ENCODE measurements at regions of chr6 and their contacts with region 1.

Region 1: GRCh38 chr6:88982720-88983119 is 19.3 kb upstream of the RNGTT start:
- H3K4me3 ChIP-seq: no peak overlapping the region
- H3K27ac ChIP-seq: no peak overlapping the region
- H3K4me1 ChIP-seq: no peaks in the 10 kb centered on the region
- CTCF ChIP-seq: peak; percentile 50; the same call in 1 of the 2 replicates

Region 2: DNA sequence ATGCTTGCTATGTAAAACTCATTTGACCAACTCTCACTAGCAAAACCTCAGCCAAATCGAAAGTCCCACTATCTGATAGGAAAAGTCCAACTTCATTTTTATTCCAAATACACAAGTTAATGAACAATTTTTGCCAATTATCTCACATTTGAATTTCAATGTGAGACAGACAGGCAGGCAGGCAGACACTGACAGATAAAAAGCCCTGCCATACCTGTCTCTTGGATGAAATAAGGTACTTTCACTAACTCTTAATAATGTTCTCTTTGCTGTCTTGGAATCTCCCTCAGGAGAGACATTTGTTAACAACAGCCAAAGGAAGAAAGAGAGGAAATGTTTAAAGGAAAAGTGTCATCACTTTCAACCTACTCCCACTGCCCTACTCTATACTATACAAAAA is 101.3 kb before region 1 on chr6:
- CTCF ChIA-PET with region 1: no interaction called
- POLR2A ChIA-PET with region 1: no interaction called
- H3K4me3 ChIP-seq: no peak overlapping the region
- H3K27ac ChIP-seq: no peak overlapping the region
- H3K4me1 ChIP-seq: no peaks in the 10 kb centered on the region
- CTCF ChIP-seq: no peak

Region 3: GRCh38 chr6:89002523-89002922 is 19.8 kb after region 1 on chr6:
- CTCF ChIA-PET with region 1: interaction called, 15 read pairs
- POLR2A ChIA-PET with region 1: no interaction called
- H3K4me3 ChIP-seq: no peak overlapping the region
- H3K27ac ChIP-seq: no peak overlapping the region
- H3K4me1 ChIP-seq: peaks cover 7% of the 10 kb centered on the region
- CTCF ChIP-seq: no peak

Region 4: DNA sequence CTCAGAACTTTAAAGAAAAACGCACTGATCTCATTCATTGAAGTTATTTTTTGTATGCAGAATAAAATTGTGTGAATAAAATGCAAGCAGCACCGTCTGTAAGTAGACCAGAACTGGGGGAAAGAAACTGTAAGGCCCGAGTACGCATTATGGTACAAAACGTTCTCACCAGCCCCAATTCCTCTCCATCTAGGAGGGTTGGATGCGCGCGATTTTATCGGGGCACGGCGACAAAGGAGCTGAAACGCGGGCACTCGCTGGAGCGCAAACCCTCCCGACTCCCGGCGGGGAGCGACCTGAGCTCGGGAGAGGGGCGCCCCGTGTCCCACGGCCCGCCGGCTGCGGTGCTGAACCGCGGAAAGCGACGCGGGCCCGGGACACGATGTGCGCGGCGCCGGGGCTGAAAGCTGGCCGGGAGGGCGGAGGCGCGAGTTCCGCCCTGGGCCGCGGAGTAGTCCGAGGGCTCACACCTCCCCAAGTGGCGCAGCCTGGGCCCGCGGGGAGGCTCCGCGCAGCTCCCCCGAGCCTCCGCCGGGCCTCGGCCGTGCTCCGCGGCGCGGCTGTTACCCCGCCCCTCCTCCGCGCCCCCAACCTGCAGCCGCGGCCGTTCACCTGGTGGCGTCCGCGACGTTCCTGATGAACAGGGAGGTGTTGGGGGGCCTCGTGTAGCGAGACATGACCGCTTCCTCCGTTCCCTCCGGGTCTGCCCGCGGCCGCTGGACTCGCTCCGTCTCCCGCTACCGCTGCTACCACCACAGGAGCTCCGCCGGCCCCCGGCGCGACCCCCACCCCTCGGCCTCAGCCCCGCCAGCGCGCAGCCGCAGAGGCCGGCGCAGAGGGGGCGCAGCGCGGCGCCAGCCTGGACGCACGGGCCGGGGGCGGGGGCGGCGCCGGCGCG is 134.7 kb after region 1 on chr6 and contains the start of gene SRSF12:
- CTCF ChIA-PET with region 1: interaction called, 46 read pairs
- POLR2A ChIA-PET with region 1: interaction called, 3 read pairs
- H3K4me3 ChIP-seq: peak within 1 kb of the TSS; percentile 58
- H3K27ac ChIP-seq: peak within 1 kb of the TSS; percentile 65; the same call in 1 of the 2 replicates
- H3K4me1 ChIP-seq: peaks cover 3% of the 10 kb centered on the region; the same call in 1 of the 2 replicates
- CTCF ChIP-seq: no peak; the same call in 1 of the 2 replicates

Region 5: DNA sequence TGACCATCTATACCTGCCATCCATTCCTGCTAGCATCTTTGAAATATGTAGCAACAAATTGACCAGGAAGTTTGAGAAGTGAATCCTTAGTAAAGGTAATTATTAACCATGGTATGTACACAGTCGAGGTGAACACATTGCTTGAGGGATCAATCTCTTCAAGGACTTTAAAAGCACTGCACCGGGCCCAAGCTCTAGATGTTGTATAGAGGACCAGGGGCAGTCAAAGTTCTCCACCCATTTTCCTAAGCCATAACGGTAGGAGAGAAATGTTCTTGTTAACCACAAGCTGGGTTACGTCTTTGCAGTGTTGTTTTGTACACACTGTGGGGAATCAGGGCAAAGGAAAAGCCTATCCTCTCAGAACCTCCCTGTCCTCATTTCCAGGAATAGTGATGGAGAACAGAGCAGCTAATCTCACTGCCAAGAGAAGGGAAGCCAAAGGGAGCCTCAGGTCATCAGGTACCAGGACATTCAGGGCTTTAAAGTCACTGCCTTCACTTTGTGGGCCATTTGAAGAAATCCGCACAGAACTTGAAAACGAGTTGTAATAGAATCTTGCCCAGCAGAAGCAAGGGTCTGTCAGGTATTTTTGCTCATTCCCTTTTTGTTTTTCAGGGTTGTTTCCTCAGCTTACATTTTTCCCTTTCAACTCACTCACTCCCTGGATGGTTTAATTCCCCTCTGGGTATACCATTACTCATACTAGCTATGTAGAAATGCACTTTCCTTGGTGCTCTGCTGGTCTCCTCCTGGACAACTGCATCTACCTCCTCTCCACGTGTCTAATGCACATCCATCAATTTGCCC is 157.8 kb after region 1 on chr6:
- CTCF ChIA-PET with region 1: interaction called, 26 read pairs
- POLR2A ChIA-PET with region 1: no interaction called
- H3K4me3 ChIP-seq: no peak overlapping the region
- H3K27ac ChIP-seq: peak overlapping the region; percentile 7; the same call in 1 of the 2 replicates
- H3K4me1 ChIP-seq: peaks cover 44% of the 10 kb centered on the region
- CTCF ChIP-seq: no peak

Region 6: DNA sequence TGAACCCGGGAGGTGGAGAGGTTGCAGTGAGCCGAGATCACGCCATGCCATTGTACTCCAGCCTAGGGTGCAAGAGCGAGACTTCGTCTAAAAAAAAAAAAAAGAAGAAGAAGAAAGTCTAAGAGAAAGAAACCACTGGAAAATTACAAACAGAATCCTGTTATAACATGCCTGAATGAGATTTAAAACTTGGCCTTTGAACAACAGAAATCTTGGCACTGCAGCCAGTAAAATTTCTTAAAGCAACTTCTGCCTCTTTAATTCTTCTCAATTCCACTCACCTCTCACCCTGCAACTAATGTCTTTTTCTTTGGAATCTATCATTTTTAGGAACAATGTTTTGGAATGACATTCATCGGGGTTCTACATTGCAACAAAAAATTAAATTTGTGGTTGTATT is 189.4 kb after region 1 on chr6:
- CTCF ChIA-PET with region 1: interaction called, 10 read pairs
- POLR2A ChIA-PET with region 1: no interaction called
- H3K4me3 ChIP-seq: no peak overlapping the region
- H3K27ac ChIP-seq: no peak overlapping the region
- H3K4me1 ChIP-seq: no peaks in the 10 kb centered on the region
- CTCF ChIP-seq: no peak

Region 7: GRCh38 chr6:89360415-89360999 is 377.8 kb after region 1 on chr6:
- CTCF ChIA-PET with region 1: interaction called, 10 read pairs
- POLR2A ChIA-PET with region 1: no interaction called
- H3K4me3 ChIP-seq: no peak overlapping the region
- H3K27ac ChIP-seq: no peak overlapping the region
- H3K4me1 ChIP-seq: no peaks in the 10 kb centered on the region
- CTCF ChIP-seq: no peak

Measured in HEK293 (cell line).